Activated B cell treated with CpG ODN at 0.5 μM for 24 hours (primary cell): ENCODE measurements at regions of chr7 and their contacts with region 1.

Region 1: GRCh38 chr7:149005241-149006050 is 22.9 kb downstream of the PDIA4 start:
- DNase-seq: peak; percentile 74
- ATAC-seq: peak; percentile 91
- H3K4me3 Mint-ChIP-seq: no peak overlapping the region
- H3K27ac Mint-ChIP-seq: no peak overlapping the region
- H3K4me1 Mint-ChIP-seq: peaks cover 3% of the 10 kb centered on the region
- H3K27me3 Mint-ChIP-seq: no peaks in the 10 kb centered on the region
- CTCF ChIP-seq: peak; percentile 56

Region 2: GRCh38 chr7:148975896-148976295 is 29.6 kb before region 1 on chr7:
- CTCF ChIA-PET with region 1: no interaction called
- POLR2A ChIA-PET with region 1: no interaction called
- intact Hi-C with region 1: no loop called
- DNase-seq: no peak
- ATAC-seq: no peak
- H3K4me3 Mint-ChIP-seq: no peak overlapping the region
- H3K27ac Mint-ChIP-seq: no peak overlapping the region
- H3K4me1 Mint-ChIP-seq: peaks cover 4% of the 10 kb centered on the region
- H3K27me3 Mint-ChIP-seq: peaks cover 8% of the 10 kb centered on the region
- CTCF ChIP-seq: no peak

Region 3: DNA sequence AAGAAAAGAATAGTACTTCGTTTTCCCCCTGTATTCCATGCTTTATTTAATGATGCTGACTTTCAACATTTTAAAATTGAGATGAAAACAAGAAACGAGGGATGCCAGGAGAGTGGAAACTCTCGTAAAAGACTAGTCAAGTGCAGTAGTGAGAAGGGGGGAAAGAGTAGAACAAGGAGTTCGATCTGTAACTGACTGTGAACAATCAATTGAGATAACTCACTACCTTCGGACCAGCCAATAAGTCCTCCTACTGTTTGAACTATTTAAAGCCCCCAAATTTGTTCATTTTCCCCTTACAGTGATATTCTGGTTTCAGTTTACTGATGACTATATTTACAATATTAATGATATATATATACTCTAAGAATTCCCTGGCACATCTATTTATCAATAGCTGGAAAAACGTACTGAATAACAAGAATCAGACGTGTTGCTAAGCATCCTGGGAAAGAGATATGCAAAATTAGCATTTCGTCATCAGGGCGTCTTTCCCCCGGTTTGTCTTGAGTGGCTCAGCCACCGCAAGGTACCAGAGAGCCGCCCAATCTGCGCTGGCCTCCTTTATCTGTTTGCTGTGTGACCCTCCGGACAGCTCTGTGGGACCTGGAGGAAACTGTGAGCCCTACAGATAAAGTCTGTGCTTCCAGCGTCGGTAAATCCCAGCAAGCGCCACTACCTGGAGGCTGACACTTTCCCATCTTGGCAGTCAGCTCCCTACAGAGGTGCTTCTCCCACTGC is 18.3 kb before region 1 on chr7:
- CTCF ChIA-PET with region 1: interaction called, 10 read pairs
- POLR2A ChIA-PET with region 1: no interaction called
- intact Hi-C with region 1: loop called (anchors 1 kb)
- DNase-seq: peak; percentile 60
- ATAC-seq: peak; percentile 85
- H3K4me3 Mint-ChIP-seq: peak overlapping the region; percentile 96
- H3K27ac Mint-ChIP-seq: peak overlapping the region; percentile 93
- H3K4me1 Mint-ChIP-seq: peaks cover 50% of the 10 kb centered on the region
- H3K27me3 Mint-ChIP-seq: peaks cover 2% of the 10 kb centered on the region
- CTCF ChIP-seq: no peak

Region 4: GRCh38 chr7:149021725-149022062 is 16.2 kb after region 1 on chr7:
- CTCF ChIA-PET with region 1: interaction called, 12 read pairs
- POLR2A ChIA-PET with region 1: no interaction called
- intact Hi-C with region 1: no loop called
- DNase-seq: no peak
- ATAC-seq: no peak
- H3K4me3 Mint-ChIP-seq: no peak overlapping the region
- H3K27ac Mint-ChIP-seq: peak overlapping the region; percentile 31
- H3K4me1 Mint-ChIP-seq: peaks cover 39% of the 10 kb centered on the region
- H3K27me3 Mint-ChIP-seq: no peaks in the 10 kb centered on the region
- CTCF ChIP-seq: no peak

Region 5: DNA sequence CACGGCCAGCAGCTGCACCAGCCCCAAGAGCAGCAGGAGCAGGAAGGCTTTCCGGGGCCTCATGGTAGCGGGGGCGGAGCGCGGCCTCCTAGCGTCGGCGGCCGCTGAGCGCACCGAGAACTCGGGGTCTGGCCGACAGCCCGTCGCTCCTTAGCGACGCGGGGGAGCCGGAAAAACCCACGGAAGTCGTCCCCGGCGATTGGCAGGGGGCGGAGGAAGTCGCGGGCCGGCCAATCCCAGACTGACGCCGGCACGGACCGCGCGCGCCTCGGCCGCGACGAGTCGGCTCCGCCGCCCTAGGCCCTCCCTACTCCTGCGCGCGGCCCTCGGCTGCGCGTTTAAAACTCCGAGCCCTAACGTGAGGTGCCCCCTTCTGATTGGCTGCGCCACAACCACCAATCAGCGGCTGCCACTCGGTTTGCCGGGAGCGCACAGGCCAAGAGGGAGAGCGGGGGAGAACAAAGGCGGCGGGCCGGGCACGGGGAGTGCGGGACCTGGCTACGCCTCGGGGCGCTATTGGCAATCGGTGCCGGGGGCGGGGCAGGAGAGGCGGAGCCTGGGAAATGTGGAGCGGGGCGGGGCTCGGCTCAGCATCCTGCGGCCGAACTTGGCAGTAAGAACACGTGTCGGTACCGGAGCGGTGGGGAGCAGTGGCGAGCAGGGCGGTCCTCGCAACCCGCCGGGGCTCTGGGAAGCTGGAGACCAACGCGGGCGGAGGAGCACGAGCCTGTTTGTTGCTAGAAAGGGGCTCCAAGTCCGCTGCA is 23.1 kb after region 1 on chr7 and contains the start of gene PDIA4:
- CTCF ChIA-PET with region 1: interaction called, 15 read pairs
- POLR2A ChIA-PET with region 1: interaction called, 6 read pairs
- intact Hi-C with region 1: loop called (anchors 1 kb)
- DNase-seq: peak; percentile 99
- ATAC-seq: peak; percentile 87
- H3K4me3 Mint-ChIP-seq: peak within 1 kb of the TSS; percentile 92
- H3K27ac Mint-ChIP-seq: peak within 1 kb of the TSS; percentile 89
- H3K4me1 Mint-ChIP-seq: peaks cover 39% of the 10 kb centered on the region
- H3K27me3 Mint-ChIP-seq: no peaks in the 10 kb centered on the region
- CTCF ChIP-seq: no peak
- total RNA-seq, gene PDIA4: 57.4 and 59.4 TPM in 2 replicates

Region 6: GRCh38 chr7:149071641-149072437 is 66.4 kb after region 1 on chr7:
- CTCF ChIA-PET with region 1: interaction called, 46 read pairs
- POLR2A ChIA-PET with region 1: no interaction called
- intact Hi-C with region 1: no loop called
- DNase-seq: no peak
- ATAC-seq: peak; percentile 45
- H3K4me3 Mint-ChIP-seq: no peak overlapping the region
- H3K27ac Mint-ChIP-seq: no peak overlapping the region
- H3K4me1 Mint-ChIP-seq: peaks cover 4% of the 10 kb centered on the region
- H3K27me3 Mint-ChIP-seq: no peaks in the 10 kb centered on the region
- CTCF ChIP-seq: no peak